ENCODE measurements at regions of chr1 and their contacts with region 1.

Region 1: DNA sequence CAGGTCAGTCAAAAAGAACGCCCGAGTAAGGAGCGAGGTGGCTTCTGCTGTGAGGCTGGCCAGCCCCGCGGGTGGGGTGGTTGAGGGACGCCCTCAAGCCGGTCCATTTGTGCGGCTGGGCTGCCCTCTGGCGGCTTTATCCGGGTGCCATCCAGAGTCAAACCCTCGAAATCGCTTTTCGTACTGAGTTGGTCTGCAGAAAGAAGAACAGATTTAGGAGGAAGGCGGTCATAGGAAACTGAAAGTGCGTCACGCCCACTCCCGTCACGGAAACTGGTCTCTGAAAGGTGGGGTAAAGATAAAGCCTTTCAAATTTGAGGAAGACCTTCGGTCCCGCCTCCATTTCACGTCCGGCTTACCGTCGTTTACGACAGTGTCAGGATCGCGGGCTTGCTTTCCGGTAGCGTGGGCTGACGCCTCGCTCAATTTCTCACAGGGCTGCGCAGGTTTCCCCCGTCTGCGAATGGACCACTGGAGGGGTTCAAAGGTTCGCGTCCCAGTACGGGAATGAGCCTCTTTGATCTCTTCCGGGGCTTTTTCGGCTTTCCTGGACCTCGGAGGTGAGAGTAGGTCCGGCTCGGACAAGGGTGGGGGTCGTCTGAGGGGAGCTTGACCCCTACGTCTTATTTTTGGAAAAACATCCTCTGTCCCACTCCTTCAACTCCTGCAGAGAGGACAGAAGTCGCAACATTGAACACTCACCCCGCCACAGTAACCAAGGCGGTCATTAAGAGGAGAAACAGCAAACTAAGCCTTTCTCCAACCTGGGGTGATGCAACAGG is at the start of gene HAX1:
- DNase-seq: peak; percentile 98
- H3K4me3 Mint-ChIP-seq: peak within 1 kb of the TSS; percentile 97
- H3K27ac Mint-ChIP-seq: peak within 1 kb of the TSS; percentile 98
- H3K4me1 Mint-ChIP-seq: peaks cover 39% of the 10 kb centered on the region
- H3K27me3 Mint-ChIP-seq: no peaks in the 10 kb centered on the region
- total RNA-seq, gene HAX1: 114 and 118 TPM in 2 replicates

Region 2: GRCh38 chr1:153796791-153797659 is 475.4 kb before region 1 on chr1:
- intact Hi-C with region 1: loop called (anchors 5 kb)
- DNase-seq: peak; percentile 94
- H3K4me3 Mint-ChIP-seq: no peak overlapping the region
- H3K27ac Mint-ChIP-seq: no peak overlapping the region
- H3K4me1 Mint-ChIP-seq: peaks cover 12% of the 10 kb centered on the region
- H3K27me3 Mint-ChIP-seq: no peaks in the 10 kb centered on the region

Region 3: GRCh38 chr1:154157520-154158306 is 114.7 kb before region 1 on chr1:
- intact Hi-C with region 1: loop called (anchors 1 kb)
- DNase-seq: peak; percentile 93
- H3K4me3 Mint-ChIP-seq: peak overlapping the region; percentile 74
- H3K27ac Mint-ChIP-seq: peak overlapping the region; percentile 82
- H3K4me1 Mint-ChIP-seq: peaks cover 55% of the 10 kb centered on the region
- H3K27me3 Mint-ChIP-seq: no peaks in the 10 kb centered on the region

Region 4: DNA sequence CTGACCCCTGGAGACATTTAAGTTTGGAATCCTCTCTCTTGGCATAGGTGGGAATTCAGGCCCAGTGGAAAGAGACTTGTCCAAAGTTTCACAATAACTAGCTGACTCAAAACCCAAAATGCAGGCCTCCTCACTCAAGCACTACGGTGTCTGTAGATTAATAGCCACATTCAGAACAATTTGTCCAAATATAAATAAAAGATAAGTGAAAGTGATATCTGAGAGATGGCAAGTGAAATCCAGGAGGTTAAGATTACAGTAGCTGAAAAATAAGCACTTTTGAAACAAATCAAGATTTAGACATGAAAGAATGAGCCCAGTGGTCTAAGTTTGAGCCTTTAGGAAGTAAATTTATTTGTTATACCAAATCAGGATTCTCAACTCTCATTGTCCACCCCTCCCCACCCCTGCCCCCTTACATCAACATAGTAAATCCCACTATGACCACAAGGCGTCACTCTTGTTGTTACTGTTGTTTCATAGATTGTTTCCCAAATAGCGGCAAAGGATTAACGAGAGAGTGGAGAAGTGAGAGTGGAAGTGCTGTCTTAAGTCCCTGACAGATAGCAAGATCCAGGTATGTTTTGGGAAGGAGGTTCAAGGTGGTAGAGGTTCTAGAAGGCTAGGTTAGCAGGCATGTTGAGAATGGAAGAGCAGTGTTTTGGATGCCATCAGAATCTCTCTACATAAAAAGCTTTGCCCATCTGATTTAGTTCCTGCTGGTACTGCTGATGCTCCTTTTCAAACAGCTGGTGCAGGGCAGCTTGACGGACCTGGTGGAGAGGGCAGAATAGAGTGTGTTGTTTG is 73.4 kb before region 1 on chr1:
- intact Hi-C with region 1: loop called (anchors 1 kb)
- DNase-seq: peak; percentile 83
- H3K4me3 Mint-ChIP-seq: no peak overlapping the region
- H3K27ac Mint-ChIP-seq: no peak overlapping the region
- H3K4me1 Mint-ChIP-seq: peaks cover 3% of the 10 kb centered on the region
- H3K27me3 Mint-ChIP-seq: peaks cover 7% of the 10 kb centered on the region

Region 5: GRCh38 chr1:154220071-154220969 is 52.1 kb before region 1 on chr1 and contains the start of gene UBAP2L:
- intact Hi-C with region 1: loop called (anchors 1 kb)
- DNase-seq: peak; percentile 100
- H3K4me3 Mint-ChIP-seq: peak within 1 kb of the TSS; percentile 96
- H3K27ac Mint-ChIP-seq: peak within 1 kb of the TSS; percentile 95
- H3K4me1 Mint-ChIP-seq: peaks cover 55% of the 10 kb centered on the region
- H3K27me3 Mint-ChIP-seq: peaks cover 3% of the 10 kb centered on the region
- total RNA-seq, gene UBAP2L: 277 and 281 TPM in 2 replicates

Region 6: DNA sequence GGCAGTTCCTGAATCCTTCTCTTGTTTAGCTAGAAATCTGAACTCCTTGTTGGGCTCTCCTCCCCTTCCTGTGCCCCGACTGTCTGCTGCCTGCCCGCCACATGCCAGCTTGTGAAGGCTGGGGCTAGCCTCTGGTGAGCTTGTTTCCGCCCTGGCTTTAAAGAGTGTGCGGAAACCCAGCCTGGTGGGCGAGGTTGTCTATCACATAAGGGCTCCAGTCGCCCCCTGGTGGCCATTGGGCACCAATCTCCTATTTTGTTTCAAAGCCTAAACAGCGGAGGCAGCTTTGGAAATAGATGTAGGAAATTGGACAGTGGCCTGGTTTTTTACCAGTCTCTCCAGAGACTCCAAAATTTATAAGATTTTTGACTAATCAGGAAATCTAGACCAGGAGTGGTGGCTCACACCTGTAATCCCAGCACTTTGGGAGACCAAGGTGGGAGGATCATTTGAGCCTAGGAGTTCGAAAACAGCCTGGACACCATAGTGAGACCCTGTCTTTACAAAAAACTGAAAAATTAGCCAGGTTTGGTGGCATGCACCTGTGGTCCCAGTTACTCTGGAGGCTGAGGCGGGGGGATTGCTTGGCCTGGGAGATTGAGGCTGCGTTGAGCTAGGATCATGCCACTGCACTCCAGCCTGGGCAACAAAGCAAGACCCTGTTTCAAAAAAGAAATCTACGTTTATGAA is 62.8 kb after region 1 on chr1:
- intact Hi-C with region 1: loop called (anchors 2 kb)
- DNase-seq: peak; percentile 96
- H3K4me3 Mint-ChIP-seq: peak overlapping the region; percentile 33
- H3K27ac Mint-ChIP-seq: peak overlapping the region; percentile 82
- H3K4me1 Mint-ChIP-seq: peaks cover 60% of the 10 kb centered on the region
- H3K27me3 Mint-ChIP-seq: no peaks in the 10 kb centered on the region

Region 7: DNA sequence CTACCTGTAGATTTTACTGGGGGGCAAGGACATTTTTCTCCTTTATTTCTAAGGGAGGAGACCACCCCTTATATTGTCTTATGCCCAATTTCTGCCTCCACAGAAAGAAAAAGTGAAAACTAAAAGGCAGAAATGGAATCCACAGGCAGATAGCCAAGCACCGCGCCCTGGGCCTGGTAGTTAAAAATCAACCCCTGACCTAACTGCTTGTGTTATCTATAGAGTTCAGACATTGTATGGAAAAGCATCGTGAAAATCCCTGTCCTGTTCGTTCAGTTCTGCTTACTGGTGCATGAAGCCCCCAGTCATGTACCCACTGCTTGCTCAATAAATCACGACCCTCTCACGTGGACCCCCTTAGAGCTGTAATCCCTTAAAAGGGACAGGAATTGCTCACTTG is 99.0 kb after region 1 on chr1:
- intact Hi-C with region 1: no loop called
- DNase-seq: no peak
- H3K4me3 Mint-ChIP-seq: no peak overlapping the region
- H3K27ac Mint-ChIP-seq: no peak overlapping the region
- H3K4me1 Mint-ChIP-seq: peaks cover 8% of the 10 kb centered on the region
- H3K27me3 Mint-ChIP-seq: no peaks in the 10 kb centered on the region

Measured in activated CD4-positive, alpha-beta T cell treated with anti-CD3 and anti-CD28 coated beads, Interleukin-2, amount 10 ng/mL, durations not matched to agents 24 days and 14 days (primary cell).